Activated CD4-positive, alpha-beta T cell treated with anti-CD3 and anti-CD28 coated beads for 36 hours (primary cell): ENCODE measurements at regions of chr7 and their contacts with region 1.

Region 1: GRCh38 chr7:30026229-30027064 is at the start of gene FKBP14:
- DNase-seq: peak; percentile 95
- ATAC-seq: peak; percentile 91
- H3K4me3 Mint-ChIP-seq: no peak within 1 kb of the TSS
- H3K27ac Mint-ChIP-seq: peak within 1 kb of the TSS; percentile 90
- H3K4me1 Mint-ChIP-seq: peaks cover 34% of the 10 kb centered on the region
- H3K27me3 Mint-ChIP-seq: no peaks in the 10 kb centered on the region
- total RNA-seq, gene FKBP14: 7.2 to 8.3 TPM

Region 2: GRCh38 chr7:29684787-29685650 is 341.4 kb before region 1 on chr7:
- CTCF ChIA-PET with region 1: no interaction called
- POLR2A ChIA-PET with region 1: no interaction called
- intact Hi-C with region 1: loop called in 1 of 2 experiments (anchors 10 kb)
- DNase-seq: peak; percentile 71
- ATAC-seq: peak; percentile 80
- H3K4me3 Mint-ChIP-seq: peak overlapping the region; percentile 76
- H3K27ac Mint-ChIP-seq: no peak overlapping the region
- H3K4me1 Mint-ChIP-seq: peaks cover 6% of the 10 kb centered on the region
- H3K27me3 Mint-ChIP-seq: peaks cover 9% of the 10 kb centered on the region

Region 3: GRCh38 chr7:30062591-30062990 is 36.1 kb after region 1 on chr7:
- CTCF ChIA-PET with region 1: interaction called, 8 read pairs
- POLR2A ChIA-PET with region 1: no interaction called
- intact Hi-C with region 1: loop called (anchors 1 to 2 kb)
- DNase-seq: no peak
- ATAC-seq: peak; percentile 53
- H3K4me3 Mint-ChIP-seq: no peak overlapping the region
- H3K27ac Mint-ChIP-seq: no peak overlapping the region
- H3K4me1 Mint-ChIP-seq: peaks cover 5% of the 10 kb centered on the region
- H3K27me3 Mint-ChIP-seq: no peaks in the 10 kb centered on the region

Region 4: DNA sequence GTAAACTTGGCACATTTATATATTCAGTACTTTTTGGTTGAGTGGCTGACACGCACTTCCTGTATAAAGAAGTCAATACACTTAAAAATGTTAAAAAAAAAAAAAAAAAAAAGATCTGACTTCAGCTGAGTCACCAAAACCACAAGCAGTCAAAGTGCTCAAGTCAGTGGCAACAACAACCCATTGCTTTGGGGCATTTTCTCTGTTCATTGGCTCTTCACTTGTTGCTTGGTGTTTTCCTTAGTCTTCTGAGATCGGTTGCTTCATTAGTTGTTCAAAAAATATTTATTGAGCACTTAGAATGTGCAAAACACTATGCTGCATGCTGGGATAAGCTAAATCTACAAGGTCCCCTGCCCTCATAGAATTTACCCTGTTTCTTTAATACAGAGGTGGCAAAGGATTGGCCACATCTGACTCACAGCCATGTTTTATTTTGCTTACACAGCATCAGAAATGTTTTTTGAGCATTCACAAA is 321.7 kb after region 1 on chr7:
- CTCF ChIA-PET with region 1: no interaction called
- POLR2A ChIA-PET with region 1: no interaction called
- intact Hi-C with region 1: loop called in 1 of 2 experiments (anchors 5 kb)
- DNase-seq: peak; percentile 59
- ATAC-seq: peak; percentile 91
- H3K4me3 Mint-ChIP-seq: peak overlapping the region; percentile 69
- H3K27ac Mint-ChIP-seq: peak overlapping the region; percentile 88
- H3K4me1 Mint-ChIP-seq: peaks cover 54% of the 10 kb centered on the region
- H3K27me3 Mint-ChIP-seq: no peaks in the 10 kb centered on the region

Region 5: DNA sequence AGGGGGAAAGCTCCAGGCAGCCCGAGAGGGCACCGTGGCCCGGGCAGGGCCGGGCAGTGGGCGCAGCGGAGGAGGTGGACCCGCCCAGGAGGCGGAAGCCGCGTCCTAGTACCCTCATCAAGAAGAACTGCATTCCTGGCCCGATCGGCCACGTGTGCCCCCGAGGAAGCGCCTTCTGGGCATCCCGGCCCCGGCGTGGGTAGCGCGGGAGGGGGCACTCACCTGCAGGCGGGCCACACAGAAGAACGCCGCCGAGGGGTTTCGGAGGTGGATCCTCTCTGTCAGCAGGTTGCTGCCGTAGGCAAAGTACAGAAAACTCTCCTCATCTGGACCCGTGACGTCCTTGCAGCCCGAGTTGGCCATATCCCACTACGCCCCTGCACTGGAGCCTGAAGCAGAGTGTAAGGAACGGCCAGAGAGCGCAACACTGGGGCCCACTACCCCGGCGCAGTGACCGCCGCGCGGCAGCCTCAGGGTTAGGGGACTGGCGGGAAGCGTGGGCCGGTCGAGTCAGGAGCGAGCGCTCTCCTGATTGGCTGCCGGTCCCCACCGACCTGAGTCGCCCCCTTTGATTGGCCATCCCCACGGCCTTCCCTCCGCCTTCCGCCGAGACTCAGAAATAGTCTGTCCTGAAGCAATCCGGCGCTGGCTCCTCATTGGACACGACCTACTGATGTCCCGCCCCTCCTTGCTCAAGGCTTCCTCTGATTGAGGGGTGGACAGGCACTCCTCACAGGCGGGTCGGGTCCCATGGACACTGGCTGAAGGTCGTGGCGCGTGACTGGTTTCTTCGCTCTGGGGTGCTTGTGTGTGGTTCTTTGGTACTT is 478.1 kb after region 1 on chr7 and contains the start of gene GGCT:
- CTCF ChIA-PET with region 1: no interaction called
- POLR2A ChIA-PET with region 1: no interaction called
- intact Hi-C with region 1: loop called (anchors 2 to 5 kb)
- DNase-seq: peak; percentile 98
- ATAC-seq: peak; percentile 99
- H3K4me3 Mint-ChIP-seq: peak within 1 kb of the TSS; percentile 84
- H3K27ac Mint-ChIP-seq: peak within 1 kb of the TSS; percentile 90
- H3K4me1 Mint-ChIP-seq: peaks cover 44% of the 10 kb centered on the region
- H3K27me3 Mint-ChIP-seq: no peaks in the 10 kb centered on the region
- total RNA-seq, gene GGCT: 48.8 to 76.8 TPM